ENCODE measurements at regions of chr2 and their contacts with region 1.

Region 1: GRCh38 chr2:101252408-101253012 is at the start of gene CNOT11:
- DNase-seq: peak; percentile 98
- ATAC-seq: peak; percentile 86
- H3K4me3 Mint-ChIP-seq: peak within 1 kb of the TSS; percentile 91
- H3K27ac Mint-ChIP-seq: peak within 1 kb of the TSS; percentile 94
- H3K4me1 Mint-ChIP-seq: peaks cover 41% of the 10 kb centered on the region
- H3K27me3 Mint-ChIP-seq: no peaks in the 10 kb centered on the region
- CTCF ChIP-seq: no peak
- total RNA-seq, gene CNOT11: 50.8 and 59.7 TPM in 2 replicates

Region 2: DNA sequence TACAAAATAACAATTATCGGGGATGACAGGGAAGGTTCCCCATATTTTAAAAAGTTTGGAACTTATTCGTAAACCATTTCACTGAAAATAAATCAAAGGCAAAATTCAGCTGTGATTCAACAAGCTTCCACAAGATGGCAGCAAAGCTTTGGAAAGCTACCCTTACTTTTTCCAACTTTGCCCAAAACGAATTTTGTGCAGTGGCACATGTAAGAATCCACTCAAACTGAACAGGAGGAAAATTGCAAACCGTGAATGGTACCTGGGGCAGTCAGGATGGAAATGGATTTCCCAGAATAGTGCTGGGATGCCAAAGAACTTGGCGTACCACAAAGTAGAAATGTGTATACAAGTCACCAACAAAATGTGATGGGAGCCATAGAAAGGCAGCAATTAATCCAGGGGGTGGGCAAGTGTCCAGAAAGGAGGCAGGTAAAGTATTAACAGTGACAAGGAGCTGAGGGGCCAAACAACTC is 239.8 kb before region 1 on chr2:
- CTCF ChIA-PET with region 1: interaction called, 8 read pairs
- POLR2A ChIA-PET with region 1: interaction called, 5 read pairs
- intact Hi-C with region 1: loop called (anchors 1 kb)
- DNase-seq: no peak
- ATAC-seq: no peak
- H3K4me3 Mint-ChIP-seq: no peak overlapping the region
- H3K27ac Mint-ChIP-seq: no peak overlapping the region
- H3K4me1 Mint-ChIP-seq: peaks cover 20% of the 10 kb centered on the region
- H3K27me3 Mint-ChIP-seq: no peaks in the 10 kb centered on the region
- CTCF ChIP-seq: peak; percentile 93

Region 3: GRCh38 chr2:101173707-101174295 is 78.7 kb before region 1 on chr2:
- CTCF ChIA-PET with region 1: no interaction called
- POLR2A ChIA-PET with region 1: interaction called, 11 read pairs
- intact Hi-C with region 1: loop called (anchors 2 kb)
- DNase-seq: peak; percentile 39
- ATAC-seq: peak; percentile 100
- H3K4me3 Mint-ChIP-seq: peak overlapping the region; percentile 29
- H3K27ac Mint-ChIP-seq: peak overlapping the region; percentile 87
- H3K4me1 Mint-ChIP-seq: peaks cover 35% of the 10 kb centered on the region
- H3K27me3 Mint-ChIP-seq: peaks cover 2% of the 10 kb centered on the region
- CTCF ChIP-seq: no peak

Region 4: GRCh38 chr2:101223814-101224231 is 28.7 kb before region 1 on chr2:
- CTCF ChIA-PET with region 1: interaction called, 3 read pairs
- POLR2A ChIA-PET with region 1: interaction called, 6 read pairs
- intact Hi-C with region 1: loop called (anchors 1 kb)
- DNase-seq: peak; percentile 28
- ATAC-seq: peak; percentile 98
- H3K4me3 Mint-ChIP-seq: peak overlapping the region; percentile 36
- H3K27ac Mint-ChIP-seq: peak overlapping the region; percentile 42
- H3K4me1 Mint-ChIP-seq: peaks cover 19% of the 10 kb centered on the region
- H3K27me3 Mint-ChIP-seq: peaks cover 34% of the 10 kb centered on the region
- CTCF ChIP-seq: no peak

Region 5: DNA sequence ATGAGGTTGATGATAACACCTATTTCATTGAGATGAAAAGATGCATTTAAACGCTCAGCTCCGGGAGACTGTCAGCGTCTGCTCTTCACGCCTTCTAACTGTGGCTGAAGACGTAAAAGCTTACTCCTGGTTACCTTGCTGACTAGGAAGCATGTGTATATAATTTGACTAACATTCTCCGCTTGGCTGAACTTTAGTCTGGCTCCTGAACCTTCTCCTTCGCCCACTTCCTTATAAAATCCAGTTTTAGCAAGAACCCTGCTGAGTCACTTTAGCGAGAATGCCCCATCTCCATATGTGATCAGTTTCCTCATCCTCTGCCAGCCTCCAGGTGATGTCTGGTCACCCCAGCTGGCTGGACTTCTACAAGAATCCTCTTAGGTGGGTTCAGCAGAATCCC is 147.5 kb after region 1 on chr2:
- CTCF ChIA-PET with region 1: no interaction called
- POLR2A ChIA-PET with region 1: no interaction called
- intact Hi-C with region 1: loop called (anchors 5 kb)
- DNase-seq: no peak
- ATAC-seq: peak; percentile 30
- H3K4me3 Mint-ChIP-seq: peak overlapping the region; percentile 56
- H3K27ac Mint-ChIP-seq: peak overlapping the region; percentile 84
- H3K4me1 Mint-ChIP-seq: peaks cover 58% of the 10 kb centered on the region
- H3K27me3 Mint-ChIP-seq: peaks cover 5% of the 10 kb centered on the region
- CTCF ChIP-seq: no peak

Measured in activated B cell treated with CpG ODN at 0.5 μM for 24 hours (primary cell).